Gastrocnemius medialis (tissue), 4 donors: ENCODE measurements at regions of chr17 and their contacts with region 1.

Region 1: GRCh38 chr17:78563189-78564145 is 13.7 kb downstream of the DNAH17 start:
- DNase-seq: peak in 1 of 2 donors; percentile 28
- ATAC-seq: peak; percentile 55 to 65
- H3K4me3 ChIP-seq: no peak overlapping the region
- H3K27ac ChIP-seq: peak overlapping the region; percentile 48 to 77 (median 69)
- H3K4me1 ChIP-seq: peaks cover 0 to 5% of the 10 kb centered on the region in 2 donors
- H3K27me3 ChIP-seq: peaks cover 2 to 30% (median 8%) of the 10 kb centered on the region in 3 donors
- CTCF ChIP-seq: no peak
- POLR2A ChIP-seq: no peak

Region 2: GRCh38 chr17:78592991-78593329 is 29.5 kb after region 1 on chr17:
- in situ Hi-C with region 1: no loop called
- intact Hi-C with region 1: loop called (anchors 2 kb)
- DNase-seq: no peak
- ATAC-seq: no peak
- H3K4me3 ChIP-seq: peak overlapping the region in 1 of 4 donors; percentile 14
- H3K27ac ChIP-seq: peak overlapping the region; percentile 63 to 80 (median 72)
- H3K4me1 ChIP-seq: peaks cover 0 to 7% of the 10 kb centered on the region in 2 donors
- H3K27me3 ChIP-seq: peaks cover 0 to 6% (median 0%) of the 10 kb centered on the region in 3 donors
- CTCF ChIP-seq: no peak
- POLR2A ChIP-seq: no peak